ENCODE measurements at regions of chr10 and their contacts with region 1.

Region 1: GRCh38 chr10:1384026-1384425 is 327.8 kb downstream of the WDR37 start:
- DNase-seq: no peak
- H3K4me3 ChIP-seq: no peak overlapping the region
- H3K27ac ChIP-seq: no peak overlapping the region
- H3K4me1 ChIP-seq: no peaks in the 10 kb centered on the region
- H3K27me3 ChIP-seq: peaks cover 0 to 42% of the 10 kb centered on the region in 2 donors
- CTCF ChIP-seq: no peak
- POLR2A ChIP-seq: no peak

Region 2: GRCh38 chr10:1425879-1426278 is 41.9 kb after region 1 on chr10:
- intact Hi-C with region 1: loop called (anchors 2 kb)
- DNase-seq: no peak
- H3K4me3 ChIP-seq: no peak overlapping the region
- H3K27ac ChIP-seq: no peak overlapping the region
- H3K4me1 ChIP-seq: no peaks in the 10 kb centered on the region
- H3K27me3 ChIP-seq: no peaks in the 10 kb centered on the region
- CTCF ChIP-seq: no peak
- POLR2A ChIP-seq: no peak

Region 3: GRCh38 chr10:2631557-2632071 is 1247.6 kb after region 1 on chr10:
- intact Hi-C with region 1: no loop called
- DNase-seq: no peak
- H3K4me3 ChIP-seq: no peak overlapping the region
- H3K27ac ChIP-seq: no peak overlapping the region
- H3K4me1 ChIP-seq: no peaks in the 10 kb centered on the region
- H3K27me3 ChIP-seq: peaks cover 0 to 14% of the 10 kb centered on the region in 2 donors
- CTCF ChIP-seq: no peak
- POLR2A ChIP-seq: no peak